Posterior vena cava (tissue), 2 donors: ENCODE measurements at regions of chr18 and their contacts with region 1.

Region 1: DNA sequence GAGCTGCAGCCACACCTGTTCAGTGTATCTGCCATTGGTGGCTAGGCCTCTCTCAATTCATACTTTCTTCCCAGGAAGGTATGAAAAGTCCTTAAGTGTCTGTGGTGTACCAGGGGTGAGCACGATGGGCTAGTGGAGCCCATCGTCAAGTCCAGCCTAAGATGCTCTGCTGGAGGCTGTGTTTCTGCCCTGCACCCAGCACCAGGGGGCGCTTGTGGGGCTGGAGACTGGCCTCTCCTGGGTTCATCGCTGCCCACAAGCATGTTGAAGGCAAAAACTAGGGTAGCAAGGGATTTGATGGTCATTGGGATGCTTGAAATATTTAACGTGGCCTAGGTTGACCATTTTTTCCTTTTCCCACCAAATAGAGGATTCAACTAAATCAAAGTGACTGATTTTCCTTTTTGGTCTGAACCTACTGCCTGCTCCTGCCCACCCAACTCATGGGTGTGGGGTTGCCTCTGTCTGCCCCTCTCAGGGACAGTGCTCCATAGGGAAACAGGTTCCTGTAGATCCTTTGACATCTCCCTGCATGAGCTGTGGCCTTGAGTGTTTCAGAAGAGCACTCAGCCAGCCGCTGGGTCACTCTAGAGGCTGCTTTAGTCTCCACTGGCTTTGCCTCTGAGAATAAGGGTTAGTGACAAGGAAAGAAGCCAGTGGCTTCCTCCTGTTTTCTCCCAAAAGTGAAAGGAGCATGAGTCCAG is 59.0 kb downstream of the TPGS2 start:
- DNase-seq: no peak

Region 2: GRCh38 chr18:37578886-37579513 is 809.2 kb after region 1 on chr18:
- intact Hi-C with region 1: no loop called
- DNase-seq: no peak

Region 3: DNA sequence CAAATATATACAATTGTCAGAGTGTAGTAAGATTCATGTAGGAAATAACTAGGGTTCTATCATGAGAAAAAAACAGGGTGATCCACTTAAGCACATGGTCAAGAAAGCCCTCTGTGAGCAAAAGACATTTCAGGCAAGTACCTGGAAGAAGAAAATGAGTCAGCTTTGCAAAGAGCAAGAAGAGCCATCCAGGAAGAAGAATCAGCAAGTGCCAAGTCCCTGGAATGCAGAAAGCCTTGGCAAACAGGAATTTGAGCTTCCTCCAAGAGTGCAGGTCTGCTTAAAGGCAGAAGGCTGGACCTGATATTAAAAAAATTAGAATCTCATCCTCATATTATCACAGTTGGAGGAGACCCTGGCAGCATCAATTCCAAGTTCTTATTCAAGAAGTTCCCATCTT is 984.4 kb after region 1 on chr18:
- intact Hi-C with region 1: loop called in 1 of 2 experiments (anchors 10 kb)
- DNase-seq: no peak